Heart left ventricle (tissue), 16 donors: ENCODE measurements at regions of chr7 and their contacts with region 1.

Region 1: GRCh38 chr7:14070746-14071444 is 81.4 kb upstream of the ETV1 start:
- DNase-seq: no peak
- ATAC-seq: no peak
- H3K4me3 ChIP-seq: no peak overlapping the region
- H3K27ac ChIP-seq: no peak overlapping the region
- H3K4me1 ChIP-seq: peaks cover 0 to 14% (median 0%) of the 10 kb centered on the region in 12 donors
- H3K27me3 ChIP-seq: no peaks in the 10 kb centered on the region
- CTCF ChIP-seq: no peak
- POLR2A ChIP-seq: no peak

Region 2: DNA sequence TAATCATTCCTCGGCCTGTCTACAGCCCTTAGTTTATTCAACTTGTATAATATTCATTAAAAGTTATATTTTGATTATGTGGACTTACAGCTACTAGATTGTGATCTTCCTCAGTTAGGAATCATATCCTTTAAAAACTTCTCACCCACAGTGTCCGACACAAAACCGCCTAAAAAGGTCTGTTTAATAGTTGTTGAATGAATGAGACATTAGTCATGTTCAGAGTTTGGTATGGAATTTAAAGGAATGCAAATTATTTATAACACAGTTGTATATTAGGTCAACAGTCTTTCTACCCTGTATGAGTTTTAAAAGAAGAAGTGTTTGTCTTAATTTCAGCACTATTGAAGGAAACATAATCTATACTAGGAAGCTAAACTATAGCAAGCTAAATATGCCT is 993.4 kb before region 1 on chr7:
- intact Hi-C with region 1: loop called in 1 of 10 experiments (anchors 10 kb)
- DNase-seq: no peak
- ATAC-seq: no peak
- H3K4me3 ChIP-seq: no peak overlapping the region
- H3K27ac ChIP-seq: no peak overlapping the region
- H3K4me1 ChIP-seq: no peaks in the 10 kb centered on the region
- H3K27me3 ChIP-seq: no peaks in the 10 kb centered on the region
- CTCF ChIP-seq: no peak
- POLR2A ChIP-seq: no peak

Region 3: GRCh38 chr7:14000247-14000646 is 70.6 kb before region 1 on chr7:
- intact Hi-C with region 1: loop called in 1 of 10 experiments (anchors 10 kb)
- DNase-seq: no peak
- ATAC-seq: no peak
- H3K4me3 ChIP-seq: no peak overlapping the region
- H3K27ac ChIP-seq: no peak overlapping the region
- H3K4me1 ChIP-seq: no peaks in the 10 kb centered on the region
- H3K27me3 ChIP-seq: no peaks in the 10 kb centered on the region
- CTCF ChIP-seq: no peak
- POLR2A ChIP-seq: no peak

Region 4: GRCh38 chr7:14125998-14126397 is 55.1 kb after region 1 on chr7:
- intact Hi-C with region 1: no loop called
- DNase-seq: no peak
- ATAC-seq: no peak
- H3K4me3 ChIP-seq: no peak overlapping the region
- H3K27ac ChIP-seq: no peak overlapping the region
- H3K4me1 ChIP-seq: no peaks in the 10 kb centered on the region
- H3K27me3 ChIP-seq: no peaks in the 10 kb centered on the region
- CTCF ChIP-seq: no peak
- POLR2A ChIP-seq: no peak

Region 5: DNA sequence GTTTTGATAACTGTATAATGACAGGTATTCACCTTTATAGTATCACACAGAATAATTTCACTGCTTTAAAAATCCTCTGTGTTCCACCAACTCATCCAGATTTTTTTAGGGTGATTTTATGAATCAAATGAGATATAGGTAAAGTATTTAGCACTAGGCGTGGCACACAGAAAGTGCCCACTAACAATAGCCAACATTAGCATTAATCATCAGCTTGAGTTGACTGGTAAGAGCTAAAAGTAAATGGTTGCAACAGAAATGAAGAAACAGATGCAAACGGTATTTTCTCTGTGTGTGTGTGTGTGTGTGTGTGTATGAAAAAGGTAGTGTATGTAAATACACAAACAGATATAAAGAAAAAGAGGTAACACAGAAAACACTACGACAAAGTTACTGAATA is 297.4 kb after region 1 on chr7:
- intact Hi-C with region 1: no loop called
- DNase-seq: no peak
- ATAC-seq: no peak
- H3K4me3 ChIP-seq: no peak overlapping the region
- H3K27ac ChIP-seq: no peak overlapping the region
- H3K4me1 ChIP-seq: peaks cover 0 to 4% (median 0%) of the 10 kb centered on the region in 12 donors
- H3K27me3 ChIP-seq: no peaks in the 10 kb centered on the region
- CTCF ChIP-seq: no peak
- POLR2A ChIP-seq: no peak